Mammary epithelial cell (primary cell): ENCODE measurements at regions of chr1 and their contacts with region 1.

Region 1: GRCh38 chr1:229043115-229043514 is 227.8 kb upstream of the RAB4A start:
- DNase-seq: no peak
- H3K4me3 ChIP-seq: no peak overlapping the region
- H3K27ac ChIP-seq: no peak overlapping the region
- H3K4me1 ChIP-seq: peaks cover 1% of the 10 kb centered on the region
- H3K27me3 ChIP-seq: peaks cover 2% of the 10 kb centered on the region
- CTCF ChIP-seq: no peak

Region 2: GRCh38 chr1:228968891-228969606 is 74.1 kb before region 1 on chr1:
- CTCF ChIA-PET with region 1: no interaction called
- dilution Hi-C with region 1: no loop called
- in situ Hi-C with region 1: no loop called
- intact Hi-C with region 1: no loop called
- DNase-seq: no peak
- H3K4me3 ChIP-seq: no peak overlapping the region
- H3K27ac ChIP-seq: no peak overlapping the region
- H3K4me1 ChIP-seq: no peaks in the 10 kb centered on the region
- H3K27me3 ChIP-seq: no peaks in the 10 kb centered on the region
- CTCF ChIP-seq: no peak

Region 3: DNA sequence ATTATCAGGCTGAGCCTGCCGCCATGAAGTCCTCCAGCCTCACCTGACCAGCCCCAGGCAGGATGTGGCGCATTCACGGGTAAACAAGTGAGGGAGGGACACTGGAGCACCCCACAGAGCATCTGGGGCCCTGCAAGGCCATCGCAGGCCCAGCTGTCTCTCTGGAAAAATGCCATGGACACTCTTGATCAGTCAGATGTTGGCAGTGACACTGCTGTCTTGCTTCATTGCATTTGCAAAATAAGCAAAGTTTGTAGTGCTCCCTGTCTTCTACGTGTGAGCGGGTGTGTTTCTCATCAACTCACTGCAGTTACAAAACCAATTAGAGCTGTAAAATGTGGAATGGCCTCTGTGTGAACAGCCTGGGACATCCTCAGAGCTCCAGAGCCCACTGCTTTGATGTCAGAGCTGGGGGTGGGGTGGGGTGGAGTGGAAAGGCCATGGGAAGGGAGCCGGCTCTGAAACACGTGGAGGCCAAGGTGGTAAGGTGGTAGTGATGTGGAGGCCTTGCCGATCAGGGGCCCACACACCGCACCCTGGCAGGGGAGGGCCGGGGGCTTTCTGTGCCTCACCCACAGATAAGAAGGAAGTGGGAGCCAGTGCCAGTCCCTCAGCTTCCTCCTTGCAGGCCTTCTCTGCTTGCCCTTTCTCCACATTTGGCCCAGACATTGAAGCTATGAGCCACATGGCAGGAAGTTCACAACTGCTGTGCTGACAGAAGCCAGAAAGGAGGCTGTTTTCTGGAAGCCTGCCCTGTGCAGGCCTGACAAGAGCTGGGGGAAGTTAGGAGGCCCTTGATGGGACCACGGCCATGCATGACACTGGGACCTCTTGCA is 52.9 kb before region 1 on chr1:
- CTCF ChIA-PET with region 1: no interaction called
- dilution Hi-C with region 1: loop called (anchors 5 kb)
- in situ Hi-C with region 1: no loop called
- intact Hi-C with region 1: no loop called
- DNase-seq: no peak
- H3K4me3 ChIP-seq: no peak overlapping the region
- H3K27ac ChIP-seq: no peak overlapping the region
- H3K4me1 ChIP-seq: no peaks in the 10 kb centered on the region
- H3K27me3 ChIP-seq: peaks cover 2% of the 10 kb centered on the region
- CTCF ChIP-seq: no peak

Region 4: GRCh38 chr1:229148041-229148671 is 105.0 kb after region 1 on chr1:
- CTCF ChIA-PET with region 1: no interaction called
- dilution Hi-C with region 1: loop called (anchors 5 kb)
- in situ Hi-C with region 1: no loop called
- intact Hi-C with region 1: no loop called
- DNase-seq: no peak
- H3K4me3 ChIP-seq: no peak overlapping the region
- H3K27ac ChIP-seq: no peak overlapping the region
- H3K4me1 ChIP-seq: peaks cover 3% of the 10 kb centered on the region
- H3K27me3 ChIP-seq: peaks cover 7% of the 10 kb centered on the region
- CTCF ChIP-seq: no peak

Region 5: GRCh38 chr1:229310833-229311232 is 267.7 kb after region 1 on chr1:
- CTCF ChIA-PET with region 1: no interaction called
- dilution Hi-C with region 1: no loop called
- in situ Hi-C with region 1: no loop called
- intact Hi-C with region 1: no loop called
- DNase-seq: no peak
- H3K4me3 ChIP-seq: no peak overlapping the region
- H3K27ac ChIP-seq: no peak overlapping the region
- H3K4me1 ChIP-seq: no peaks in the 10 kb centered on the region
- H3K27me3 ChIP-seq: no peaks in the 10 kb centered on the region
- CTCF ChIP-seq: no peak